Caco-2 (cell line): ENCODE measurements at regions of chr10 and their contacts with region 1.

Region 1: DNA sequence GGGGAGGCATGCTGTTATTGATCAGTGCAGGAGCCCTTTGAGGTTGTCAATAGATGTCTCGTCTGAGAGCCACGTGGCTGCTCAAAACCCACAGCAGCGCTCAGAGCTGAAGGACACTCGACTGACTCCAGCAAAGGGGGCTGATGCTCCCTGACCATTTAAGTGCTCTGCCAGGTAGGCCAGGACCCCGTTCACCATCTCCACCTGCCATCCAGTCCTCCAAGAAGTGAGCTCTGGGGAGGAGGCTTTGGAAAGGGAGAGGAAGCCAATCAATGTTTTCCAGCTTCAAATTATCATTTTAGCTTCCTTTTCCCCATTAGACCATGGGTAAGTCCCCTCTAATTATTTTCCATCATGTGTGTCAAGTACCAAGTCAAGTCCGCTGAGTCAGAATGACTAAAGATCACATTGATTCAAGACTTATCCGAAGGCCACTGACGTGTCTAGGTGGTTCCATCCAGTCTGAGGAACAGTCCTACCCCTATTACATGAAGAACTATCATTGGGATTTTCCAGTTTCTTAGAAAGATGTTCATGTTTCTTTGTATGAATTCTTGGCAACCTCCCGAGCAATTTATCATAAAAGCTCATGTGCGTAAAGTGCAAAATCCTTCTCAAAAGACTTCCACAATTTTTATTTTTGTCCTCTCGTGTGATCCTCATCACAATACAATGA is 302.6 kb upstream of the LYZL1 start:
- DNase-seq: no peak
- H3K4me3 ChIP-seq: no peak overlapping the region
- H3K4me3 Mint-ChIP-seq: no peak overlapping the region
- H3K27ac Mint-ChIP-seq: no peak overlapping the region
- H3K4me1 ChIP-seq: peaks cover 24% of the 10 kb centered on the region
- H3K4me1 Mint-ChIP-seq: peaks cover 17% of the 10 kb centered on the region
- H3K27me3 ChIP-seq: no peaks in the 10 kb centered on the region
- H3K27me3 Mint-ChIP-seq: no peaks in the 10 kb centered on the region
- CTCF ChIP-seq: no peak

Region 2: DNA sequence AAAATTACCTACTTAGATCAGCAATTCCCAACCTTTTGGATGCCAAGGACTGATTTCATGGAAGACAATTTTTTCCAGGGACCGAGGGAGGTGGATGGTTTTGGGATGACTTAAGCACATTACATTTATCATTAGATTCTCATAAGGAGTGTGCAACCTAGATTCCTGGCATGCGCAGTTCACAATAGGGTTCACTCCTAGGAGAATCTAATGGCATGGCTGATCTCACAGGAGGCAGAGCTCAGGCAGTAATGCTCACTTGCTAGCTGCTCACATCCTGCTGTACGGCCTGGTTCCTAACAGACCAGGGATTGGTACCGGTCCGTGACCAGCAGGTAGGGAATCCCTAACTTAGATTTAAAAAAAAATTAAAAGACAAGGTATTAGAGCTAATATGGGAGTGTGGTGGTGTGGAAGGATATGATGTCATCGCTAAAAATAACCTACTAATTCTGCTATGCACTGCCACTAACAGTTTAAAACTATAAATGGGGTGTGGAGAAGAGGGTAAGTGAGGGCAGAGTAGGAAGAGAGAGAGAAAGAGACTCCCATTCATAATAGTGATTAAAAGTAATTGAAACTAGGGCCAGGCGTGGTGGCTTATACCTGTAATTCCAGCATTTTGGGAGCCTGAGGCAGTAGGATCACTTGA is 26.3 kb before region 1 on chr10:
- CTCF ChIA-PET with region 1: no interaction called
- POLR2A ChIA-PET with region 1: interaction called, 10 read pairs
- intact Hi-C with region 1: no loop called
- DNase-seq: no peak
- H3K4me3 ChIP-seq: no peak overlapping the region
- H3K4me3 Mint-ChIP-seq: no peak overlapping the region
- H3K27ac Mint-ChIP-seq: no peak overlapping the region
- H3K4me1 ChIP-seq: no peaks in the 10 kb centered on the region
- H3K4me1 Mint-ChIP-seq: peaks cover 6% of the 10 kb centered on the region
- H3K27me3 ChIP-seq: no peaks in the 10 kb centered on the region
- H3K27me3 Mint-ChIP-seq: no peaks in the 10 kb centered on the region
- CTCF ChIP-seq: no peak